ENCODE measurements at regions of chr10 and their contacts with region 1.

Region 1: GRCh38 chr10:127853868-127854768 is 38.6 kb downstream of the CLRN3 start:
- DNase-seq: peak; percentile 70 to 76 (median 75)
- ATAC-seq: peak; percentile 94 to 98 (median 96)
- H3K4me3 ChIP-seq: no peak overlapping the region
- H3K27ac ChIP-seq: no peak overlapping the region
- H3K4me1 ChIP-seq: no peaks in the 10 kb centered on the region
- H3K27me3 ChIP-seq: no peaks in the 10 kb centered on the region
- CTCF ChIP-seq: peak; percentile 74 to 86 (median 82)
- POLR2A ChIP-seq: no peak

Region 2: DNA sequence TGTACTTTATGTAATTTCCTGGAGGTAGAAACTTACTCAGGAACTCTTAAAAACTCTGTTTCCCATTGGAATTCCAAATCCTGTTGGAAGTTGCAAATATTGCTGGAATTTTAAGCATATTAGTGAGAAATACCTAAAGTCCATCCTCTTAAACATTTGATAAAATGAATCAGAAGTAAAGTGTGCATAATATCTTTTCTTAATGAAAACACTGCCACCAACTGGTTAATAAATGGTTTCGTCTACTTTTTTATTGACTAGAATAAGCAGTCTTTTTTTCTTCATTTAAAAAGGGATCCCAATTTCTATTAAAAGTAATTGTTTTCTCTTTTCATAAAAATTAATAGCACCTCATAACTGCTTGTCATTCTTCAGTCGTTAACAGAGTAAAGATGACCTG is 276.7 kb before region 1 on chr10:
- intact Hi-C with region 1: no loop called
- DNase-seq: no peak
- ATAC-seq: no peak
- H3K4me3 ChIP-seq: no peak overlapping the region
- H3K27ac ChIP-seq: no peak overlapping the region
- H3K4me1 ChIP-seq: no peaks in the 10 kb centered on the region
- H3K27me3 ChIP-seq: no peaks in the 10 kb centered on the region
- CTCF ChIP-seq: peak in 2 of 4 donors; percentile 16 to 24
- POLR2A ChIP-seq: no peak

Region 3: GRCh38 chr10:127715782-127716378 is 138.2 kb before region 1 on chr10:
- intact Hi-C with region 1: loop called (anchors 10 kb)
- DNase-seq: no peak
- ATAC-seq: peak; percentile 33 to 56 (median 44)
- H3K4me3 ChIP-seq: no peak overlapping the region
- H3K27ac ChIP-seq: no peak overlapping the region
- H3K4me1 ChIP-seq: no peaks in the 10 kb centered on the region
- H3K27me3 ChIP-seq: no peaks in the 10 kb centered on the region
- CTCF ChIP-seq: peak; percentile 42 to 62 (median 52)
- POLR2A ChIP-seq: no peak

Region 4: DNA sequence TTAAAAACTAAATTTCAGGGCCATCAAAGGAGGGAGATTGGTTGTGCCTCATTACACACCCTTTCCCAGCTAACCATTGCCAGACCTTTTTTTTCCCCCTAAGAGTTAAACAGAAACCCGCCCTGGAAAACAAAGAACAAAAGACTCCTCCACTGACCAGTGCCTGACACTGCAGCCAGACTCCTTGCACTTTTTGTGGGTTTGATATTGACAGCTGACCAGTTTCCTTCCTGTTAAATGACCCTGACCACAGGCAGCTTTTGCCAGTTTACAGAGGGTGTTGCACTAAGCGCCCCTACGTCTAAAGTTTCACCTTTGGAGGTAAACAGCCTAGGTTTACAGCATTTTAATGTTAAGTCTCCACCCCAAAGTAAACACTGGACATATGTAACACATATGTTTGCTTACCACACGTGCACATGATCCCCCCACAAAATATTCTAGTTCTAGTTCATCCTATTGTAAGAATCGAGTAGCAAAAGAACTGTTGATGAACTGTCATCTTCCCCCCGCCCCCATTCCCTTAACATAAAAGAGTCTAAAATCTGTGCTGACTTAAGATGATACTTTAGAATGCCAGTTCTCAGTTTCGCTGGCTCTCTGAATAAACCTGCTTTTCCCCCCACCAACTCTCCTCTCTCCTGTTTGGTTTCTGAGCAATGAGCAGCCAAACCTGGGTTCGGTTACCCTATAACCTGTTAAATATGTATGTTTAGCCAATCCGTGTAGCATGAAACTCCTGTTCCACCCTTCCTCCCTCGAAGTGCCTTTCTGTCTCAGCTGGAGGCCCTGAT is 79.2 kb before region 1 on chr10:
- intact Hi-C with region 1: no loop called
- DNase-seq: no peak
- ATAC-seq: no peak
- H3K4me3 ChIP-seq: no peak overlapping the region
- H3K27ac ChIP-seq: no peak overlapping the region
- H3K4me1 ChIP-seq: no peaks in the 10 kb centered on the region
- H3K27me3 ChIP-seq: no peaks in the 10 kb centered on the region
- CTCF ChIP-seq: no peak
- POLR2A ChIP-seq: no peak

Region 5: GRCh38 chr10:127990846-127991542 is 136.9 kb after region 1 on chr10:
- intact Hi-C with region 1: no loop called
- DNase-seq: no peak
- ATAC-seq: peak in 3 of 4 donors; percentile 15 to 64 (median 51)
- H3K4me3 ChIP-seq: no peak overlapping the region
- H3K27ac ChIP-seq: peak overlapping the region in 2 of 3 donors; percentile 5 to 12
- H3K4me1 ChIP-seq: peaks cover 0 to 9% (median 0%) of the 10 kb centered on the region in 4 donors
- H3K27me3 ChIP-seq: no peaks in the 10 kb centered on the region
- CTCF ChIP-seq: no peak
- POLR2A ChIP-seq: no peak